Activated B cell treated with CpG ODN at 0.5 μM for 24 hours (primary cell): ENCODE measurements at regions of chrX and their contacts with region 1.

Region 1: GRCh38 chrX:79270401-79270800 is 96.7 kb downstream of the ITM2A start:
- DNase-seq: peak; percentile 37
- ATAC-seq: peak; percentile 95
- H3K4me3 Mint-ChIP-seq: no peak overlapping the region
- H3K27ac Mint-ChIP-seq: peak overlapping the region; percentile 79
- H3K4me1 Mint-ChIP-seq: peaks cover 37% of the 10 kb centered on the region
- H3K27me3 Mint-ChIP-seq: no peaks in the 10 kb centered on the region
- CTCF ChIP-seq: no peak

Region 2: DNA sequence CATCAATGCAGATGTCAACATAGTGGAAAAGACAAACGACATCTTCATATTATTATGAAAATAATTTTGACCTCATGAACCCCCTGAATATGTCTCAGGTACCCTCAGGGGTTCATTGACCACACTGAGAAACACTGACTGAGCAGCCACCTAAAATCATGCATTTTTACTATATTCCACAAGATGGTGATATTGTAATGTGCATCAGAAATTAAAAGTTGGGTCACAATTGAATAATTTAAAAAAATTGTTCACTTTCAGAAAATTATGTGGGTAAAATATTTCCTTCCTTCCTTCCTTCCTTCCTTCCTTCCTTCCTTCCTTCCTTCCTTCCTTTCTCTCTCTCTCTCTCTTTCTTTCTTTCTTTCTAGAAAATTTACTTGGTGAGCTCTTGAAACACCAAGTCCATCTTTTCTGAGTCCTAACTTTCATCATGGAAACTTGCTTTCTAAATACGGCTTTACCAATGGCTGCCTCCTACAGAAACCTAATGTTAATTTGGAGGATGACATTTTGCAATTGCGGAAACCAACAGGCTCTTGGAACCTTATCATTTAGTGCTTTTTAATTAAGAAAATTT is 714.9 kb before region 1 on chrX:
- CTCF ChIA-PET with region 1: interaction called, 6 read pairs
- POLR2A ChIA-PET with region 1: no interaction called
- intact Hi-C with region 1: loop called (anchors 1 kb)
- DNase-seq: no peak
- ATAC-seq: no peak
- H3K4me3 Mint-ChIP-seq: no peak overlapping the region
- H3K27ac Mint-ChIP-seq: peak overlapping the region; percentile 75
- H3K4me1 Mint-ChIP-seq: peaks cover 13% of the 10 kb centered on the region
- H3K27me3 Mint-ChIP-seq: no peaks in the 10 kb centered on the region
- CTCF ChIP-seq: no peak

Region 3: DNA sequence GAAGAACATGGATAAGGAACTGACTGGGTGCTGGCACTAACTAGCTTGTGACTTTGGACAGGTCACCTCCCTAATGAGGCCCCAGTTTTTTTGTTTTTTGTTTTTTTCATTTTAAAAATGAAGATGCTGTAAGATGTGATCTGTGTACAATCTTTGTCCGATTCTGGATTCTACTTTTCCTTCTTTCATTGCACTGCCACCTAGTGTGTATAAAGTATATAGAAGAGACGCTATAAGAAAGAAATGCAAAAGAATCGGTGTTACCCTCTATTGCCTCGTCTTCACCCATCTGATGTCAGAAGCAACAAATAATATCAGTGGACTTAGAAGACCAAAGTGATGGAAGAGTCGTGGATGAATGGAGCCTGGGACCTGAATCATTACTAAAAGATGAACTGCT is 383.9 kb before region 1 on chrX:
- CTCF ChIA-PET with region 1: no interaction called
- POLR2A ChIA-PET with region 1: no interaction called
- intact Hi-C with region 1: loop called (anchors 2 kb)
- DNase-seq: no peak
- ATAC-seq: no peak
- H3K4me3 Mint-ChIP-seq: no peak overlapping the region
- H3K27ac Mint-ChIP-seq: no peak overlapping the region
- H3K4me1 Mint-ChIP-seq: peaks cover 6% of the 10 kb centered on the region
- H3K27me3 Mint-ChIP-seq: no peaks in the 10 kb centered on the region
- CTCF ChIP-seq: no peak

Region 4: DNA sequence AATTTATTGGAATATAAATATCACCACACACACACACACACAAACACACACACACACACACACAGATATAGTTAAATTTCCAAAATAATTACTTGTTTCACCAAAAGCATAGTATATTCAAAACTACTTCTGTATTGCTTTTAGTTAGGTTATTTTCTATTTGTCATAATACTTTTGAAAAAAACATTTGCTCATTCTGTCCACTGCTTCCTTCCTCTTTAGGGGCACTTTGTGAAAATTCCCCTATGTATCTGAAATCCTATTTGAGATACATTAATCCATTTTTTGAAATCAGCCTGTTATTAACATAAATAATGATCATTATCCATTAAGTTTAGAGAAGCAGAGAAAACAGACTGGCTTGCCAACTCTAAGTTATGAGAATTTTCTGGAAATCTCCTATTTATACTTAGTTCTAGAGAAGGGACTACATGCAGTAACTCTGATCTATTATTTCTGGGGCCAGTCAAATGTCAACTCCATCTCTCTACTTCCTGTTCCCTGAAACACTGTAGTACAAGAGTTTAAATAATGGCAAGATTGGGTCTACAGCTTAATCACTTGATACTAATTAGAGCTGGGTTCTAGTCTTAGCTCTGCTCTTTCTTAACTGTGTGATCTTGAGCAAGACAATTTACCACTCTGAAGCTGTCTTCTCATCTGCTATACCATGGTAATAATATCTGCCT is 180.4 kb before region 1 on chrX:
- CTCF ChIA-PET with region 1: interaction called, 12 read pairs
- POLR2A ChIA-PET with region 1: no interaction called
- intact Hi-C with region 1: no loop called
- DNase-seq: no peak
- ATAC-seq: peak; percentile 74
- H3K4me3 Mint-ChIP-seq: peak overlapping the region; percentile 19
- H3K27ac Mint-ChIP-seq: peak overlapping the region; percentile 80
- H3K4me1 Mint-ChIP-seq: peaks cover 30% of the 10 kb centered on the region
- H3K27me3 Mint-ChIP-seq: no peaks in the 10 kb centered on the region
- CTCF ChIP-seq: no peak

Region 5: DNA sequence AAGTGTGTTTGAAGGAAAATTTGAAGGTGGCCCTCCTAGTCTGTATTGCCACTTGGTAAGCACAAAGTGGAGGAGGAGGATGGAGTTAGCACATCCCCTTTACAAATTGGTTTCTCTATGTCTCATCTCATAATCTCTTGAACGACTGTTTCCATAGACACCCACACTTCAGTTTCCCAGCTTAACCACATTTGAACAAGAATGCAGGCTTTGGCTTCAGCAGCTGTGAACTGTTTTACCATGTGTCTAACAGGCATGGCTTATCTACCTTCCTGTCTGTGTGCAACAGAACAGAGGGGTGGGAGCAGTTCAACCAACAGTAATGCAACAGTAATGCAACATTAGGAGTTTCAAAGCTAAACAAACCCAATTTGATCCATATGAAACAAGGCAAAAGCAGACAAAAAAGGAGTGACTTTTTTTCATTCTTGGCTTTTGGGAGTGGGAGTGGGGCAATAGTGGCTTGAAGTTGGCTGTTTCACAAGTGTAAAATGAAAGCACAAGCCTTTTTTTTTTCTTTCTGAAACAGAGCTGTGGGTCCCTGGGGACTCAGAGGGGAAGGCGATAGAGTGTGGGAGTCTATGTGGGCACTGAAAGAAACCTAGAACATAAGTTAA is 11.2 kb before region 1 on chrX:
- CTCF ChIA-PET with region 1: no interaction called
- POLR2A ChIA-PET with region 1: interaction called, 3 read pairs
- intact Hi-C with region 1: loop called (anchors 1 kb)
- DNase-seq: no peak
- ATAC-seq: peak; percentile 83
- H3K4me3 Mint-ChIP-seq: peak overlapping the region; percentile 59
- H3K27ac Mint-ChIP-seq: peak overlapping the region; percentile 91
- H3K4me1 Mint-ChIP-seq: peaks cover 72% of the 10 kb centered on the region
- H3K27me3 Mint-ChIP-seq: no peaks in the 10 kb centered on the region
- CTCF ChIP-seq: no peak

Region 6: DNA sequence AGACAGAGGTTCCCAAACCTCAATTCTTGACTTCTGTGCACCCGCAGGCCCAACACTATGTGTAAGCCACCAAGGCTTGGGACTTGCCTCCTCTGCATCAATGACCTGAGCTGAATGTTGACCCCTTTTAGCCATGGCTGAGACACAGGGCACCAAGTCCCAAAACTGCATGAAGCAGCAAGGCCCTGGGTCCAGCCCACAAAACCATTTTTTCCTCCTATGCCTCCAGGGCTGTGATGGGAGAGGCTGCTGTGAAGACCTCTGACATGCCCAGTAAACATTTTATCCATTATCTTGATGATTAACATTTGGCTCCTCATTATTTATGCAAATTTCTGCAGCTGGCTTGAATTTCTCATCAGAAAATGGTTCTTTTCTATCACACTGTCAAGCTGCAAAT is 11.4 kb after region 1 on chrX:
- CTCF ChIA-PET with region 1: no interaction called
- POLR2A ChIA-PET with region 1: no interaction called
- intact Hi-C with region 1: no loop called
- DNase-seq: no peak
- ATAC-seq: no peak
- H3K4me3 Mint-ChIP-seq: no peak overlapping the region
- H3K27ac Mint-ChIP-seq: no peak overlapping the region
- H3K4me1 Mint-ChIP-seq: no peaks in the 10 kb centered on the region
- H3K27me3 Mint-ChIP-seq: no peaks in the 10 kb centered on the region
- CTCF ChIP-seq: no peak